Activated CD4-positive, alpha-beta memory T cell treated with anti-CD3 and anti-CD28 coated beads, Interleukin-2, amount 10 ng/mL, durations not matched to agents 7 days and 5 days (primary cell): ENCODE measurements at regions of chr6 and their contacts with region 1.

Region 1: DNA sequence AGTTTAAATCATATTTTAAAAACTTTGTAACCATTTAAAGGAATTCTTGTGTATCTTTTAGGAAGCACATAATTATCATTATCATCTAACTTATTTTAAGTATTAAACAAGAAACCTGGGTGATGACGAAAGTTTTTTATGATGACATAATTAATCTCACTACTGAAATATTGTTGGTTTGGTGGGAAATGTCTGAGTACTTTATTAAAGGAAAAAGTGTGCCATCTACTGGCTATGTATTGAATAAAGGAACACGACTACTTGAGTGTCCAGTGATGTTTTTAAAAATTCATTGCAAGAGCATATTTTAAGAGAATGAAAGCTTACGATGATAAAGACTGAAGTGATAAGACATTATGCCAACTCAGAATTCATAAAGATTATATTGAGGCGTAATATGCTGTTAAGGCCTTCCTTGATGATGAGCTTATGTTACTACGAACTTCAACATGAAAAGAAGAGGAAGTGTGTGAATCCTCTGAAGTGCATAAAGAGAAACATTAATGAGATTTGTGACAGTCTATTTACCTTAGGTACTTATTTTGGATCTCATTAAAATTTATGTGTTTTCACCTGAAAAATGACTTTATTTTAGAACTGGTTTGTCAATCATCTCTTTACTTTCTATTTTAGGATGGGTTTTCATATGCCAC is 12.0 kb upstream of the TRMT11 start:
- DNase-seq: no peak
- H3K4me3 Mint-ChIP-seq: no peak overlapping the region
- H3K27ac Mint-ChIP-seq: no peak overlapping the region
- H3K4me1 Mint-ChIP-seq: peaks cover 5% of the 10 kb centered on the region
- H3K27me3 Mint-ChIP-seq: no peaks in the 10 kb centered on the region

Region 2: GRCh38 chr6:125314019-125314581 is 660.2 kb before region 1 on chr6:
- CTCF ChIA-PET with region 1: interaction called, 18 read pairs
- POLR2A ChIA-PET with region 1: no interaction called
- DNase-seq: peak; percentile 46
- H3K4me3 Mint-ChIP-seq: no peak overlapping the region
- H3K27ac Mint-ChIP-seq: no peak overlapping the region
- H3K4me1 Mint-ChIP-seq: no peaks in the 10 kb centered on the region
- H3K27me3 Mint-ChIP-seq: peaks cover 13% of the 10 kb centered on the region

Region 3: DNA sequence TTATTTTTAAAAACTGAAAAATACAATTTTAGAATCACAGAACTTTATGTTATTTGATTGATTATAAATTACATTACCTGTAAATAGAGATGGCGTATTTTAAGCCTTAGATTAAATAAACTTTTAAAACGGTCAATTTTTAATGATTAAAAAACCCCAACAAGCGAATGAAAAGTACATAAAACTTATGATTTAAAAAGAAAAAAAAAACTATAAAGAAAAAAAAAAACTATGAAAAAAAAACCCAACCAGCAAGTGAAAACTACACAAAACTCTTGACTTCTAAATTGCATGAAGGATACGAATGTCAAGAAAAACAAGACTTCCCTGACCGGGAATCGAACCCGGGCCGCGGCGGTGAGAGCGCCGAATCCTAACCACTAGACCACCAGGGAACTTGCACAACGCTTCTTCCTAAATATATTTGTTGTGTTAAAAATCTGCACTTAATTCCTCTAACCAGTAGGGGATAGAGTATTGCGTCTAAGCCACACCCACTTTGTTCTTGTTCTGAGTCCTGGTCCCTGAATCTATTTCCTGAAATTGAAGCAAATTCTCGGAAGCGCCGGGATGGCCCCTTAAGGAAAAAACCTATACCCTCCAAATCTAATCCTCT is 194.3 kb before region 1 on chr6:
- CTCF ChIA-PET with region 1: interaction called, 14 read pairs
- POLR2A ChIA-PET with region 1: interaction called, 9 read pairs
- DNase-seq: peak; percentile 86
- H3K4me3 Mint-ChIP-seq: no peak overlapping the region
- H3K27ac Mint-ChIP-seq: no peak overlapping the region
- H3K4me1 Mint-ChIP-seq: peaks cover 13% of the 10 kb centered on the region
- H3K27me3 Mint-ChIP-seq: peaks cover 18% of the 10 kb centered on the region

Region 4: GRCh38 chr6:125858427-125859320 is 115.7 kb before region 1 on chr6:
- CTCF ChIA-PET with region 1: interaction called, 14 read pairs
- POLR2A ChIA-PET with region 1: no interaction called
- DNase-seq: peak; percentile 33
- H3K4me3 Mint-ChIP-seq: no peak overlapping the region
- H3K27ac Mint-ChIP-seq: no peak overlapping the region
- H3K4me1 Mint-ChIP-seq: peaks cover 11% of the 10 kb centered on the region
- H3K27me3 Mint-ChIP-seq: no peaks in the 10 kb centered on the region

Region 5: DNA sequence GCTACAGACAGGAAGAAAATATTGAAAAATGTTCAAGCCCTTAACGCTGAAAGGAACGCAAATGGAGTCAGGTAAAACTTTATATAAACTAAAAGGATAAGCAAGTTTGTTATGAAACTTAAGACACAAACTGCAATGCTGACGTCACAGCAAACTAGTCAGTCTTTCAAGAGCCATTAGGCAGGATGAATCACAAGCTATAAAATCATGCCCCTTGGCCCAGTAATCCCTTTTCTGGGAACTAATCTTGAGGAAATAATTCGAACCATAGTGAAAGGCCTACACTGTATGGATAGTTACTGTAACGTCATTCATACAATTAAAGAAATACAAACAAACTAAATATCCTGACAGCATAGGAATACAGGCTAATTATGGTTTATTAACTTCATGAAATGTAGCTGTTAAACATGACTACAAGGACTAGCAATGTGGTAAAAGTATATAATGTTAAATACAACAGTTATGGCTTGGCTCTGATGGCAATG is 60.4 kb before region 1 on chr6:
- CTCF ChIA-PET with region 1: no interaction called
- POLR2A ChIA-PET with region 1: no interaction called
- DNase-seq: no peak
- H3K4me3 Mint-ChIP-seq: no peak overlapping the region
- H3K27ac Mint-ChIP-seq: no peak overlapping the region
- H3K4me1 Mint-ChIP-seq: peaks cover 30% of the 10 kb centered on the region
- H3K27me3 Mint-ChIP-seq: no peaks in the 10 kb centered on the region

Region 6: GRCh38 chr6:125986300-125987025 is 12.1 kb after region 1 on chr6 and contains the start of gene TRMT11:
- CTCF ChIA-PET with region 1: interaction called, 20 read pairs
- POLR2A ChIA-PET with region 1: interaction called, 16 read pairs
- DNase-seq: peak; percentile 79
- H3K4me3 Mint-ChIP-seq: peak within 1 kb of the TSS; percentile 3
- H3K27ac Mint-ChIP-seq: no peak within 1 kb of the TSS
- H3K4me1 Mint-ChIP-seq: peaks cover 14% of the 10 kb centered on the region
- H3K27me3 Mint-ChIP-seq: no peaks in the 10 kb centered on the region
- total RNA-seq, gene TRMT11: 17.6 to 19.2 TPM